ENCODE measurements at regions of chr1 and their contacts with region 1.

Region 1: DNA sequence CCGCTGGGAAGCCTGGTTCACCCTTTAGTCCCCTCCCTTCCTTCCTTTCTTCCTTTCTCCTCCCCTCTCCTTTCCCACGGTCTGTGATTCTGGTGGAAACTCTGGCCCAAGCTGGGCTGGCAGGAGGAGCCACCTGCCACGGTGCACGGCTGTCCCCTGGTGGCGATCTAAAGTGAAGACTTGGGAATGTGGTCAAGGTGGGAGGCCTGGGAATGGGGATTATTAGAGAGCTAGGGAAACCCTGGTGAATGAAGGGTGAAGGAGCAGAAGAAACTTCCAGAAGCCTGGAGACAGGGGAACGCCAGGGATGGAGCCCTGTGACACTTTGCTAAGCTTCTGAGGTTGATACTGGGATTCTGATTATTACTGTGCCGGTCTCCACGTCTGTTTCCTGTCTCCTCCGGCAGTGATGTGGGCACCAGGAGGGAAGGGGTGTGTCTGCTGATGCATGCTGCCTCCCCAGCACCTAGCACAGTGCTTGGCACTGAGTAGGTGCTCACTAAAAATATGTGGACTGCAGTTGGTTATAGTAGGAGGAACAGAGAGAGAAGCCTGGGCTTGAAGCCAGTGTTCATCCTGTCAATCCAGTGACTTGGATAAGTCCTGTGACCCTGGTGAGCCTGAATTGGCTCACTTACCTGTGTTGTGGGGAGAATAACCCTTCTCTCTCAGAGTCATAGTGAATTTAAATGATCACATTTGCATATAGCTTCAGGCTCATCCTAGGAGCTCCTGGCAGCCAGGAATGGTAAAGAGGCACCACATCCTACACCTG is 71.2 kb upstream of the NBPF3 start:
- DNase-seq: peak; percentile 52 to 64 (median 60)
- H3K4me3 ChIP-seq: no peak overlapping the region
- H3K27ac ChIP-seq: no peak overlapping the region
- H3K4me1 ChIP-seq: peaks cover 0 to 8% (median 2%) of the 10 kb centered on the region in 4 experiments
- H3K27me3 ChIP-seq: no peaks in the 10 kb centered on the region

Region 2: GRCh38 chr1:21255278-21255942 is 113.3 kb before region 1 on chr1:
- CTCF ChIA-PET with region 1: interaction called, 159 read pairs
- POLR2A ChIA-PET with region 1: interaction called, 3 read pairs
- DNase-seq: peak; percentile 83 to 90 (median 87)
- H3K4me3 ChIP-seq: no peak overlapping the region
- H3K27ac ChIP-seq: no peak overlapping the region
- H3K4me1 ChIP-seq: peaks cover 0 to 12% (median 9%) of the 10 kb centered on the region in 4 experiments
- H3K27me3 ChIP-seq: no peaks in the 10 kb centered on the region

Region 3: GRCh38 chr1:21280011-21280471 is 88.7 kb before region 1 on chr1:
- CTCF ChIA-PET with region 1: interaction called, 20 read pairs
- POLR2A ChIA-PET with region 1: no interaction called
- DNase-seq: peak in 1 of 3 donors; percentile 27
- H3K4me3 ChIP-seq: peak overlapping the region in 1 of 7 experiments; percentile 1
- H3K27ac ChIP-seq: no peak overlapping the region
- H3K4me1 ChIP-seq: peaks cover 0 to 21% (median 14%) of the 10 kb centered on the region in 4 experiments
- H3K27me3 ChIP-seq: peaks cover 0 to 2% (median 0%) of the 10 kb centered on the region in 5 experiments

Region 4: DNA sequence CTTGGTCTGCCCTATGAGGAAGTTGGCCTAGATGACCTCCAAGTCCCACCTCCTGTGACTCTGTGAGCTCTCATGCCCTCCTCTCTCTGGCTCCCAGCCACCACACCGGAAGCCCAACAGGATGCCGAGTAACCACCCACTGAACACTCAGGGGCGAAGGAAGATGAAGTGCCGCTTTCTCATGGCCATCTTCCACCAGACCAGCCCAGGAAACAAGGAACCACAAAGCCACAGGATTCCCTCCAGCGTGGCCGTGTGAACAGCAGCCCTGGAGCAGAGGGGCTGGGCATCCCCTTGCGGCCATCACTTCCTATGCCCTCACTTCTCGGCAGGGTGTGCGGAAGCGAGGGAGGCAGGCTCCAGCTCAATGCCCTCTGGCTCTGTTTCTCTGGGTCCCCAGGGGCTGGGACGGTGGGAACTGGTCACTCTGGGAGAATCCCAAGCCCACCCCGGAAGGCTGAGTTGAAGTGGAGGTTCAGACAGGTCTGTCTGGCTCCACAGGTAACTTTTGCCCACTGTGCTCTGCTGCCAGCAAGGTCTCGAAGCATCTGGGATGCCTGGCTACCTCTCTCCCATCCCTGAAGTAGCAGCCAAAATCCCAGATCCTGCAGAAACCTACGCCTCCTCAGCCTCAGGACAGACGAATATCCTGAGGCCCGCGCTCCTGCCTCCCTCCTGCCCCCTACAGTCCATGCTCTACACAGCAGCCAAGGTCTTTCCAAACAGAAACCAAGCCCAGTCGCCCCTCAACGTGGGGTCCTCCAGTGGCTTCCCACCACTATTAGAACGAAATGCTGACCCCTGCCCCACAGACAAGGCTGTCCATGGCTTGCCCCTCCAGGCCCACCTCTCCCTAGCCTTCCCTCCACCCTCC is 34.3 kb before region 1 on chr1:
- CTCF ChIA-PET with region 1: interaction called, 11 read pairs
- POLR2A ChIA-PET with region 1: interaction called, 3 read pairs
- DNase-seq: peak; percentile 99 to 100 (median 100)
- H3K4me3 ChIP-seq: peak overlapping the region; percentile 11 to 84 (median 56)
- H3K27ac ChIP-seq: peak overlapping the region; percentile 56
- H3K4me1 ChIP-seq: peaks cover 20 to 72% (median 64%) of the 10 kb centered on the region in 4 experiments
- H3K27me3 ChIP-seq: peaks cover 0 to 4% (median 0%) of the 10 kb centered on the region in 5 experiments

Region 5: DNA sequence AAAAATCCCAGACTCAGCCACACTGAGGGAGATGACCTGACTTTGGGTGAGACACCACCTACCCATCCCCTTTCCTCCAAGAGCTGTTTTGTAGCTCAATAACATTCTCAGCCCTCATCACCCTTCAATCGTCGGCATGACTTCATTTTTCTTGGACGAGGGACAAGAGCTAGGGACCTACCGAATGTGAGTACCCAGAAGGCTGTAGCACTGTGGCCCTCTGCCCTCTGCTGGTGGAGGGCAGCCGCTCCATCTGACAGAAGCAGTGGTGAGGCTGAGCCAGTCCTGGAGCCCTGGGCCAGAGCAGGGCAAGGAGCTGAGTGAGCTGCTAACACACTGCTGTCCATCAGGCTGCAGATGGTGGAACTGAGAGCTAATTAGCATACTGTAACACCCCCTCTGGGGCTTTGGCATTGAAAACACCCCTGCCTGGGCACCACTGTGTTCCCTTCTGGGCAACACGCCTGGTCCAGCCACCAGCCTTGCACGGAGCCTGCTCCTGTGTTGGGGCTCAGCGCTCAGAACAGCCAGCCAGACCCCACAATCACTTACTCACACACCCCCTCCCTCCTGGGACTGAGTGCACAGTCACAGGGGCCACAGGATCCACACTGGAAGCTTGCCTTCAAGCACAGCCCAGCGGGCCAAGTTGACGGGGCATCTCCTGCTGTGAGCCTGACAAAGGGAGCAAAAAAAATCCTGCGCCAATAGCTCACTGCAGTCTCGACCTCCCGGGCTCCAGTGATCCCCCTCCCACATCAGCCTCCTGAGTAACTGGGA is 122.3 kb after region 1 on chr1:
- CTCF ChIA-PET with region 1: interaction called, 26 read pairs
- POLR2A ChIA-PET with region 1: no interaction called
- DNase-seq: peak; percentile 32 to 53 (median 51)
- H3K4me3 ChIP-seq: no peak overlapping the region
- H3K27ac ChIP-seq: no peak overlapping the region
- H3K4me1 ChIP-seq: peaks cover 0 to 5% (median 4%) of the 10 kb centered on the region in 4 experiments
- H3K27me3 ChIP-seq: peaks cover 0 to 15% (median 7%) of the 10 kb centered on the region in 5 experiments